ENCODE measurements at regions of chr19 and their contacts with region 1.

Region 1: DNA sequence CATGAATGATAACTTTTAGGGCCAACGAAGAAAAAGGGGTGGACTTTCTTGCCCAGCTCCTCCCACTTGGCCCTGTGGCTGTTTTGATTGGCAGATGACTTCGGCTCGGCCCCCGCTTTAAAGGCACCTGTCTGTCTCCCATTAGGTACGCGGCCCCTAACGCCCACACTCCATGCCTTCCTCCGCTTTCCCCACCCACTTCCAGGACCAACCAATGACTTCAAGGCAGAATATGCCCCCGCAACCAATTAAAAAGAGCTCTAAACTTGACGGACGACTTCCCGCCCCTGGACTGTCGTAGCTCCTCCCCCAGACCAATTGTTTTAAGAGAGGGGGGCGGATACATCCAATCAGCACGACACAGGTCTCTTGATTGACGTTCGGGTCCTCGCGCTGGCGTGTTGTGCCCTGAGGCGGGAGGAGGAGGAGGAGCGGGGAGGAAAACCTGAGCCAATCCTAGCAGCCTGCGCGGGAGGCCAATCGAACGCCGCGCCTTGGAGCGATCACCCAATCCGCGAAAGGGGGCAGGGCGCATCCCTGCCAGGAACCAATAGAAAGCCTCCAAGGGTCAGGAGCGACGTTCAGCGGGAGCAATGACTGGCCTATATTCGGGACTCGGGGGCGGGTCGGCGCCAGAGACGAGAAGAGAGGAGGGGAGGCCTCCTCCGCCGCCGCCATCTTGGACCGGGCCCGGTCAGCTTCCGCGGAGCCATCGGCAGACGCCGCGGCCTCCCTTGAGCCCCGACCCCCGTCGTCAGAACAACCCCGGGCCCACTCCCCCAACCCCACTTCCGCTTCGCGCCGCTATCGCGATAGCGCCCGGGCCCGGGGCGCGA is at the start of gene CNOT3:
- DNase-seq: peak; percentile 100
- ATAC-seq: peak; percentile 77
- H3K4me3 ChIP-seq: peak within 1 kb of the TSS; percentile 28 to 94 (median 79)
- H3K4me3 Mint-ChIP-seq: peak within 1 kb of the TSS; percentile 89
- H3K27ac ChIP-seq: peak within 1 kb of the TSS; percentile 74 to 96
- H3K27ac Mint-ChIP-seq: peak within 1 kb of the TSS; percentile 90
- H3K4me1 ChIP-seq: peaks cover 24 to 32% of the 10 kb centered on the region in 2 donors
- H3K4me1 Mint-ChIP-seq: peaks cover 49% of the 10 kb centered on the region
- H3K27me3 ChIP-seq: peaks cover 0 to 13% (median 2%) of the 10 kb centered on the region in 4 experiments
- H3K27me3 Mint-ChIP-seq: peaks cover 4% of the 10 kb centered on the region
- CTCF ChIP-seq: no peak
- total RNA-seq, gene CNOT3: 71.0 and 82.1 TPM in 2 replicates

Region 2: DNA sequence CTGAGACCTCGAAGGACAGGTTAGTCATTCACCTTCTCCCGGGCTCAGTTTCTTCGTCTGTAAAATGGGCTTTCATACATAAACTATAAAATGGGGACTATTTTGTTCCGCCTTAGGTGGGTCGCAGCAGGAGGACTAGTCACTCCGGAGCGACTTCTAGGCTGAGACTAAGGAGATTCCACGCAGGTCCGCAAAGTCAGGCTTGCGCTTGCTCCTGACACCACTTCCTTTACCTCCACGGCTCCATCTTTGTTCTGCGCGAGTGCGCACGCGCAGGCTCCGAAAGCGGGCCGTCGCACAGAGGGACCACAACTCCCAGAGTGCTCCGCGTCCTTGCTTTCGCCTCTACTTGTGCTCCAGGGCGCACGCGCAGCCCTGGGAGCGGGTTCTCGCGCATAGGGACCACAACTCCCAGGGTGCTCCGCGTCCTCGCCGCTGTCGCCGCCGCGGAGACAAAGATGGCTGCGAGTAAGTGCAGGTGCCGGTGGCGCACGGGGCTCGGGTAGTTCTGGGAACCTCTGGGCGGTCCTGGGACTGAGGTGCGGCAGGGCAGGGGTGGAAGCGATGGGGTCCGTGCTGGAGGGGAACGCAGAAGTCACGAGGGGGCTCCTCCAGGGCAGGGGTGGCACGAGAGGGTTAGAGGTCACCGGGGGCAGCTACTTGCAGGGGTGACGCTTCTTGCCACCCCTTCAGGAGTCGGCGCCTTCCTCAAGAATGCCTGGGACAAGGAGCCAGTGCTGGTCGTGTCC is 34.7 kb before region 1 on chr19 and contains the start of gene NDUFA3:
- CTCF ChIA-PET with region 1: no interaction called
- POLR2A ChIA-PET with region 1: interaction called, 4 read pairs
- intact Hi-C with region 1: loop called (anchors 1 kb)
- DNase-seq: peak; percentile 99
- ATAC-seq: peak; percentile 99
- H3K4me3 ChIP-seq: peak within 1 kb of the TSS; percentile 59 to 90 (median 76)
- H3K4me3 Mint-ChIP-seq: peak within 1 kb of the TSS; percentile 100
- H3K27ac ChIP-seq: peak within 1 kb of the TSS; percentile 59 to 74
- H3K27ac Mint-ChIP-seq: peak within 1 kb of the TSS; percentile 89
- H3K4me1 ChIP-seq: peaks cover 6 to 13% of the 10 kb centered on the region in 2 donors
- H3K4me1 Mint-ChIP-seq: peaks cover 20% of the 10 kb centered on the region
- H3K27me3 ChIP-seq: no peaks in the 10 kb centered on the region
- H3K27me3 Mint-ChIP-seq: no peaks in the 10 kb centered on the region
- CTCF ChIP-seq: no peak
- total RNA-seq, gene NDUFA3: 91.8 and 94.4 TPM in 2 replicates

Region 3: GRCh38 chr19:54115109-54116063 is 21.9 kb before region 1 on chr19 and contains the starts of genes PRPF31 and TFPT:
- CTCF ChIA-PET with region 1: interaction called, 7 read pairs
- POLR2A ChIA-PET with region 1: interaction called, 25 read pairs
- intact Hi-C with region 1: loop called (anchors 1 kb)
- DNase-seq: peak; percentile 99
- ATAC-seq: peak; percentile 93
- H3K4me3 ChIP-seq: peak within 1 kb of the TSS; percentile 71 to 86 (median 81)
- H3K4me3 Mint-ChIP-seq: peak within 1 kb of the TSS; percentile 89
- H3K27ac ChIP-seq: peak within 1 kb of the TSS; percentile 76 to 78
- H3K27ac Mint-ChIP-seq: peak within 1 kb of the TSS; percentile 87
- H3K4me1 ChIP-seq: peaks cover 14 to 25% of the 10 kb centered on the region in 2 donors
- H3K4me1 Mint-ChIP-seq: peaks cover 31% of the 10 kb centered on the region
- H3K27me3 ChIP-seq: no peaks in the 10 kb centered on the region
- H3K27me3 Mint-ChIP-seq: no peaks in the 10 kb centered on the region
- CTCF ChIP-seq: no peak
- total RNA-seq, gene PRPF31: 65.4 and 66.2 TPM in 2 replicates
- total RNA-seq, gene TFPT: 10.4 and 12.7 TPM in 2 replicates

Region 4: GRCh38 chr19:54147676-54148075 is 10.4 kb after region 1 on chr19:
- CTCF ChIA-PET with region 1: no interaction called
- POLR2A ChIA-PET with region 1: no interaction called
- intact Hi-C with region 1: no loop called
- DNase-seq: no peak
- ATAC-seq: no peak
- H3K4me3 ChIP-seq: no peak overlapping the region
- H3K4me3 Mint-ChIP-seq: no peak overlapping the region
- H3K27ac ChIP-seq: no peak overlapping the region
- H3K27ac Mint-ChIP-seq: no peak overlapping the region
- H3K4me1 ChIP-seq: no peaks in the 10 kb centered on the region
- H3K4me1 Mint-ChIP-seq: no peaks in the 10 kb centered on the region
- H3K27me3 ChIP-seq: no peaks in the 10 kb centered on the region
- H3K27me3 Mint-ChIP-seq: no peaks in the 10 kb centered on the region
- CTCF ChIP-seq: no peak

Region 5: DNA sequence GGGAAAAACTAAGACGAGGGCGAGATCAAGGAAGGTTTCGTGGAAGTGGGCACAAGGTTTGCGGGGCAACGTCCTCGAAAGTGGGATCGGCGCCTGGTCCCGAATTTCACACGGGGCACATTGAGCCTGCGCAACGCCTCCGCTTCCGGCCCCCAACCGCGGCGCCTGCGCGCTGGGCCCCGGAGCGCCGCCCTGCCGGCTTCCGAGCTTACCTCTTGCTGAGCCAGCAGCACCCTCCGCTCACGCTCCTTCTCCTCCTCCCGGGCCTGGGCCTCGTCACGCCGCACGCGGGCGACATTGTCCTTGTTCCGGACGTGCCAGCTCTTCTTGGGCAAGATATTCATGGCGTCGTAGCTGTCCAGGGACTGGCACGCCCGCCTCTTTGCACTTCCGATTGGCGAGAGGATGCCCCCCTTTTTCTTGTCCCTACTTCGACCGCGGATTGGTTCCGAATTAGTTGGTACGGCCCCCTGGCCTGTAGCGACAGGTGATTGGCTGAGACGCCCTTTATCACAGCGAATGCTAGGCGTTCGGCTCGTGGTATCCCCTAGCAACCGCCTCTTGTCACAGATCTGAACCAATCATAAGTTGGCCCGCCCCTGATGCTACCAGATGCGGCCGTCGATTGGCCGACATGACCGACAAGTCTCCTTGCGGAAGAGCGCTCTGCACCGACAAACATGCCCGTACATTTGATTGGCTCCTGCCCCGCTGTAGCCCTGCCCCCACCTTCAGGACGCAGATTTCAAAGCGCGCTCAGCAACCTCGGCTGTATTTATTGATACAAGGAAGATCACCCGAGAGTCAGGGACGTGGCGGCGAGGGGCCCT is 22.3 kb after region 1 on chr19 and contains the start of gene LENG1:
- CTCF ChIA-PET with region 1: interaction called, 5 read pairs
- POLR2A ChIA-PET with region 1: interaction called, 24 read pairs
- intact Hi-C with region 1: loop called (anchors 1 kb)
- DNase-seq: peak; percentile 100
- ATAC-seq: peak; percentile 87
- H3K4me3 ChIP-seq: peak within 1 kb of the TSS; percentile 67 to 95 (median 79)
- H3K4me3 Mint-ChIP-seq: peak within 1 kb of the TSS; percentile 100
- H3K27ac ChIP-seq: peak within 1 kb of the TSS; percentile 75 to 82
- H3K27ac Mint-ChIP-seq: peak within 1 kb of the TSS; percentile 100
- H3K4me1 ChIP-seq: peaks cover 35 to 48% of the 10 kb centered on the region in 2 donors
- H3K4me1 Mint-ChIP-seq: peaks cover 45% of the 10 kb centered on the region
- H3K27me3 ChIP-seq: peaks cover 0 to 6% (median 3%) of the 10 kb centered on the region in 4 experiments
- H3K27me3 Mint-ChIP-seq: peaks cover 8% of the 10 kb centered on the region
- CTCF ChIP-seq: peak; percentile 26
- total RNA-seq, gene LENG1: 13.7 and 16.5 TPM in 2 replicates

Region 6: GRCh38 chr19:54203151-54203611 is 65.9 kb after region 1 on chr19:
- CTCF ChIA-PET with region 1: no interaction called
- POLR2A ChIA-PET with region 1: no interaction called
- intact Hi-C with region 1: loop called (anchors 1 kb)
- DNase-seq: peak; percentile 23
- ATAC-seq: no peak
- H3K4me3 ChIP-seq: no peak overlapping the region
- H3K4me3 Mint-ChIP-seq: peak overlapping the region; percentile 96
- H3K27ac ChIP-seq: no peak overlapping the region
- H3K27ac Mint-ChIP-seq: peak overlapping the region; percentile 46
- H3K4me1 ChIP-seq: peaks cover 46 to 66% of the 10 kb centered on the region in 2 donors
- H3K4me1 Mint-ChIP-seq: peaks cover 71% of the 10 kb centered on the region
- H3K27me3 ChIP-seq: no peaks in the 10 kb centered on the region
- H3K27me3 Mint-ChIP-seq: no peaks in the 10 kb centered on the region
- CTCF ChIP-seq: no peak

Region 7: DNA sequence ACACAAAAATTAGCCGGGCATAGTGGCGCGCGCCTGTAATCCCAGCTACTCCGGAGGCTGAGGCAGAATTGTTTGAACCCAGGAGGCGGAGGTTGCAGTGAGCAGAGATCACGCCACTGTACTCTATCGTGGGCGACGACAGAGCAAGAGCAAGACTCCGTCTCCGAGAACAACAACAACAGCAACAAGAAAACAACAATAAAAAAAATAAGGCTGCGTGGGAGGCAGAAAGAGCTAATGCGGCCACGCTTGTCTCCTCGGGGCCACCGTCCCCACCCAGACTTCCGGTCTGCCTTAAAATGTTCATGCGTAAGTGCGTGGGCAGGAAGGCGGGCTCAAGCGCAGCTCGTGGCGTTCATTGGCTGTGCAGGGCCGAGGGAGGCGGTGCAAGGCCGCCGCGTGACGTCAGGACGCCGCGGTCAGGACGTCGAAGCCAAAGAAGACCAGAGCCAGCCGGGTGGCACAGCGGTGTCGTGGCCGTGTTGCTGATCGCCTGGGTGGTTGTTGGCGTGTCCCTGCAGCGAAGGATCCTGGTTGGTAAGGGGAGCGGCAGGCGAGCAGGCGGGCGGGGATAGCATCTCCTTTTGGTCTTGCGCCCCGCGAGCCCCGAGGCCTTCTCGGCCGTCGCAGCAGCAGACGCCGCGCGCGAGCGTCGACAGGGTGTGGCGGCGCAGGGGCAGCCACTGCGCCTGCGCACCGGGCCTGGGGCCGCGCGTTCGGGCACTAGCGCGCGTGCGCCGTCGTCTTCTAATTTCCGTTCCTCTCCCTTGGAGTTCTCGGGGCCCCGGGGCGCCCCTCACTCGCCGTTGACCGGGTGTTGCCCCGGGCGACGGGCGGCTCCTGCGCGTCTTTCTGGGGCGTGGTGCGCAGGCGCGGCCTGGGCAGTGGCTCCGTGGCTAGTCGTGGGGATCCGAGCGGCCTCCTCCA is 311.7 kb after region 1 on chr19 and contains the start of gene LENG8:
- CTCF ChIA-PET with region 1: no interaction called
- POLR2A ChIA-PET with region 1: interaction called, 3 read pairs
- intact Hi-C with region 1: loop called (anchors 1 kb)
- DNase-seq: peak; percentile 100
- ATAC-seq: peak; percentile 93
- H3K4me3 ChIP-seq: peak within 1 kb of the TSS; percentile 71 to 91 (median 88)
- H3K4me3 Mint-ChIP-seq: peak within 1 kb of the TSS; percentile 95
- H3K27ac ChIP-seq: peak within 1 kb of the TSS; percentile 93 to 98
- H3K27ac Mint-ChIP-seq: peak within 1 kb of the TSS; percentile 100
- H3K4me1 ChIP-seq: peaks cover 31 to 33% of the 10 kb centered on the region in 2 donors
- H3K4me1 Mint-ChIP-seq: peaks cover 48% of the 10 kb centered on the region
- H3K27me3 ChIP-seq: no peaks in the 10 kb centered on the region
- H3K27me3 Mint-ChIP-seq: no peaks in the 10 kb centered on the region
- CTCF ChIP-seq: no peak
- total RNA-seq, gene LENG8: 668 and 687 TPM in 2 replicates

Region 8: DNA sequence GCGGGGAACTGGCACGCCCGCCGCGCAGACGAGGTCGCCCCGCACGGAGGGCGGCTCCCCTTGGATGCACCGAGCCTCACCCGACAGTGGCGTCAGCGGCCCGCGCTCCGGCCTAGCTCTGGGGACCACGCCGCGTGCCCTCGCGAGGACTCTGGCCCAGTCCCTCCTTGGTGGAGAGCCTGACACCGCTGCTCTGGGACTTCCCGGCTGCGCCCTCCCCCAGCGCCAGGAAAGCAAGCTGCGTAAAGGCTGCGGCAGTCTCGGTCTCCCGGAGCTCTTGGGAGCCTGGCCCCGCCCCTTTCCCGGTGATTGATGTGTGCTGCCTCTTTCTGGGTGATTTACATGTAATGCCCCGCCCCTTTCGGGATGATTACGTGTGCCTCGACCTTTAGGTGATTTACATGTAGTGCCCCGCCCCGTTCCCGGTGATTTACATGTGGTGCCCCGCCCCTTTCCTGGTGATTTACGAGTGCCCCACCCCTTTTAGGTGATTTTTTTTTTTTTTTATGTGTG is 326.3 kb after region 1 on chr19 and contains the start of gene LENG9:
- CTCF ChIA-PET with region 1: no interaction called
- POLR2A ChIA-PET with region 1: no interaction called
- intact Hi-C with region 1: loop called (anchors 1 kb)
- DNase-seq: no peak
- ATAC-seq: peak; percentile 62
- H3K4me3 ChIP-seq: peak within 1 kb of the TSS; percentile 65 to 88 (median 74)
- H3K4me3 Mint-ChIP-seq: peak within 1 kb of the TSS; percentile 91
- H3K27ac ChIP-seq: peak within 1 kb of the TSS; percentile 84 to 85
- H3K27ac Mint-ChIP-seq: peak within 1 kb of the TSS; percentile 93
- H3K4me1 ChIP-seq: peaks cover 16 to 29% of the 10 kb centered on the region in 2 donors
- H3K4me1 Mint-ChIP-seq: peaks cover 23% of the 10 kb centered on the region
- H3K27me3 ChIP-seq: peaks cover 0 to 3% (median 0%) of the 10 kb centered on the region in 4 experiments
- H3K27me3 Mint-ChIP-seq: peaks cover 6% of the 10 kb centered on the region
- CTCF ChIP-seq: no peak
- total RNA-seq, gene LENG9: 6.6 and 6.9 TPM in 2 replicates

Measured in B cell (primary cell).